ENCODE measurements at regions of chr1 and their contacts with region 1.

Region 1: GRCh38 chr1:224851210-224851847 is 78.1 kb upstream of the DNAH14 start:
- DNase-seq: peak; percentile 39 to 73
- ATAC-seq: peak; percentile 71 to 83 (median 73)
- H3K4me3 ChIP-seq: no peak overlapping the region
- H3K27ac ChIP-seq: no peak overlapping the region
- H3K4me1 ChIP-seq: no peaks in the 10 kb centered on the region
- H3K27me3 ChIP-seq: no peaks in the 10 kb centered on the region
- CTCF ChIP-seq: peak; percentile 48

Region 2: GRCh38 chr1:224368409-224368808 is 482.9 kb before region 1 on chr1:
- intact Hi-C with region 1: no loop called
- DNase-seq: no peak
- ATAC-seq: peak; percentile 36 to 79 (median 68)
- H3K4me3 ChIP-seq: no peak overlapping the region
- H3K27ac ChIP-seq: no peak overlapping the region
- H3K4me1 ChIP-seq: peaks cover 9% of the 10 kb centered on the region
- H3K27me3 ChIP-seq: no peaks in the 10 kb centered on the region
- CTCF ChIP-seq: no peak

Region 3: GRCh38 chr1:224644553-224645154 is 206.7 kb before region 1 on chr1:
- intact Hi-C with region 1: loop called (anchors 2 to 5 kb)
- DNase-seq: no peak
- ATAC-seq: peak; percentile 55 to 86 (median 68)
- H3K4me3 ChIP-seq: no peak overlapping the region
- H3K27ac ChIP-seq: no peak overlapping the region
- H3K4me1 ChIP-seq: no peaks in the 10 kb centered on the region
- H3K27me3 ChIP-seq: no peaks in the 10 kb centered on the region
- CTCF ChIP-seq: peak; percentile 84

Region 4: GRCh38 chr1:224922404-224923164 is 71.3 kb after region 1 on chr1:
- intact Hi-C with region 1: loop called in 1 of 2 experiments (anchors 2 kb)
- DNase-seq: no peak
- ATAC-seq: peak; percentile 54 to 76 (median 70)
- H3K4me3 ChIP-seq: no peak overlapping the region
- H3K27ac ChIP-seq: no peak overlapping the region
- H3K4me1 ChIP-seq: no peaks in the 10 kb centered on the region
- H3K27me3 ChIP-seq: no peaks in the 10 kb centered on the region
- CTCF ChIP-seq: peak; percentile 70

Measured in psoas muscle (tissue), 8 donors.